Activated naive CD4-positive, alpha-beta T cell treated with anti-CD3 and anti-CD28 coated beads for 36 hours (primary cell): ENCODE measurements at regions of chr2 and their contacts with region 1.

Region 1: GRCh38 chr2:160406591-160407392 is 86.8 kb downstream of the RBMS1 start:
- DNase-seq: peak; percentile 85
- H3K4me3 Mint-ChIP-seq: peak overlapping the region; percentile 81
- H3K27ac Mint-ChIP-seq: peak overlapping the region; percentile 94
- H3K4me1 Mint-ChIP-seq: peaks cover 75% of the 10 kb centered on the region
- H3K27me3 Mint-ChIP-seq: no peaks in the 10 kb centered on the region

Region 2: GRCh38 chr2:159168707-159169106 is 1238.1 kb before region 1 on chr2:
- CTCF ChIA-PET with region 1: no interaction called
- intact Hi-C with region 1: no loop called
- DNase-seq: no peak
- H3K4me3 Mint-ChIP-seq: no peak overlapping the region
- H3K27ac Mint-ChIP-seq: no peak overlapping the region
- H3K4me1 Mint-ChIP-seq: no peaks in the 10 kb centered on the region
- H3K27me3 Mint-ChIP-seq: no peaks in the 10 kb centered on the region

Region 3: DNA sequence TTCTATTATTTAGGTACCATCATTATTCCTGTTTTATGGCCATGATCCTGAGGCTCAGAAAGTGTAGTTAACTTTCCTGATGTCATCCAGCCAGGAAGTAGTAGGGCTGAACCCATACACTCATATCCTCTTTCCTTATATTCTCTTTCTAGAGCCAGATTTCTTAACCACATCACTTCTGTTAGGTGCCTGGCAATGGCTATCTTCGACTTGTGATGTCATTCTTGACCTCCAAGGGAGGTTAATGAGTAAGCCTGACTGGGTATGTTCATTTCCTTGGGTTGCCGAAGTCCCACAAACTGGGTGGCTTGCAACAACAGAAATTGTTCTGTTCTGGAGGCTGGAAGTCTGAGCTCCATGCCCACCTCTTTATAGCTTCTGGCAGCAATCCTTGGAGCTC is 250.1 kb before region 1 on chr2:
- CTCF ChIA-PET with region 1: no interaction called
- intact Hi-C with region 1: no loop called
- DNase-seq: no peak
- H3K4me3 Mint-ChIP-seq: no peak overlapping the region
- H3K27ac Mint-ChIP-seq: no peak overlapping the region
- H3K4me1 Mint-ChIP-seq: no peaks in the 10 kb centered on the region
- H3K27me3 Mint-ChIP-seq: no peaks in the 10 kb centered on the region

Region 4: GRCh38 chr2:160269803-160270570 is 136.8 kb before region 1 on chr2:
- CTCF ChIA-PET with region 1: no interaction called
- intact Hi-C with region 1: loop called (anchors 5 kb)
- DNase-seq: peak; percentile 64
- H3K4me3 Mint-ChIP-seq: peak overlapping the region; percentile 65
- H3K27ac Mint-ChIP-seq: peak overlapping the region; percentile 53
- H3K4me1 Mint-ChIP-seq: peaks cover 39% of the 10 kb centered on the region
- H3K27me3 Mint-ChIP-seq: no peaks in the 10 kb centered on the region

Region 5: DNA sequence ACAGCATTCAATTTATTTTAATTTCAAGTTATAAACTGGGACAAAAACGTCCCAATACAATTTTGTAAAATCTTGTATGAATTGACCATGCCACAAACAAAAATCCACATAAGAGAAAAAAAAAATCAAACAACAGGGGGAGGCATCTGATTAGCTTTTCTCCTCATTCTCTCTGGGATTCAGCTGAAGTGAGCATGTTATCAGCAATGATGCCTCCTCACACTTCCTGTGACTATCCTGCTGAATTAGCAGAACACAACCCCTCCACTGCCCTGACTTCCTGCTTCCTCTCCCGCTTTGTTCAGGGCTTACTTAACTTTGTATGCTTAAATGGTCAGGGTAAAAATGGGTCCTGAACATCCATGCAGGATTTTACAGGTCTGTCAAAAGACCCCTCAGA is 74.5 kb before region 1 on chr2:
- CTCF ChIA-PET with region 1: interaction called, 3 read pairs
- intact Hi-C with region 1: loop called (anchors 2 kb)
- DNase-seq: peak; percentile 50
- H3K4me3 Mint-ChIP-seq: no peak overlapping the region
- H3K27ac Mint-ChIP-seq: peak overlapping the region; percentile 38
- H3K4me1 Mint-ChIP-seq: peaks cover 81% of the 10 kb centered on the region
- H3K27me3 Mint-ChIP-seq: no peaks in the 10 kb centered on the region

Region 6: DNA sequence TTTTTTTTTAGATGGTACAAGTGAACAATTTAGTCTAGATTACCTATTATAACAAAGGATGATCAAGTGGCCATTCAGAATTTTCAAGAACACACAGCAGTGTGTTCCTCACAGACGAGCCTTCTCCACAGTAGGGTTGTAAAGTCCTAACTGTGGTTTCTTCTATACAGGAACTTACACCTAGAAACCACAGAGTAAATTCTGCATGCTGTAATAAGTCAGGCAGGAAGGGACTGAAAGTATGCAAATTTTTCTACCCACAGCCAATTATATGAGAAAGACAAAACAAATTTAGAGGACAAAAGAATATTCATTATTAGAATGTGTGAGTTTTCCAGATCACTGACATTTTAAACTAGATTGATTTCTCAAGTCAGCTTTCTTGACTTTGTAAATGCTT is 12.6 kb before region 1 on chr2:
- CTCF ChIA-PET with region 1: interaction called, 5 read pairs
- intact Hi-C with region 1: loop called (anchors 1 kb)
- DNase-seq: no peak
- H3K4me3 Mint-ChIP-seq: peak overlapping the region; percentile 26
- H3K27ac Mint-ChIP-seq: peak overlapping the region; percentile 83
- H3K4me1 Mint-ChIP-seq: peaks cover 60% of the 10 kb centered on the region
- H3K27me3 Mint-ChIP-seq: no peaks in the 10 kb centered on the region

Region 7: GRCh38 chr2:160493227-160494028 is 86.6 kb after region 1 on chr2 and contains the start of gene RBMS1:
- CTCF ChIA-PET with region 1: interaction called, 3 read pairs
- intact Hi-C with region 1: loop called (anchors 1 kb)
- DNase-seq: peak; percentile 58
- H3K4me3 Mint-ChIP-seq: peak within 1 kb of the TSS; percentile 93
- H3K27ac Mint-ChIP-seq: peak within 1 kb of the TSS; percentile 93
- H3K4me1 Mint-ChIP-seq: peaks cover 43% of the 10 kb centered on the region
- H3K27me3 Mint-ChIP-seq: no peaks in the 10 kb centered on the region
- total RNA-seq, gene RBMS1: 27.8 to 29.1 TPM

Region 8: DNA sequence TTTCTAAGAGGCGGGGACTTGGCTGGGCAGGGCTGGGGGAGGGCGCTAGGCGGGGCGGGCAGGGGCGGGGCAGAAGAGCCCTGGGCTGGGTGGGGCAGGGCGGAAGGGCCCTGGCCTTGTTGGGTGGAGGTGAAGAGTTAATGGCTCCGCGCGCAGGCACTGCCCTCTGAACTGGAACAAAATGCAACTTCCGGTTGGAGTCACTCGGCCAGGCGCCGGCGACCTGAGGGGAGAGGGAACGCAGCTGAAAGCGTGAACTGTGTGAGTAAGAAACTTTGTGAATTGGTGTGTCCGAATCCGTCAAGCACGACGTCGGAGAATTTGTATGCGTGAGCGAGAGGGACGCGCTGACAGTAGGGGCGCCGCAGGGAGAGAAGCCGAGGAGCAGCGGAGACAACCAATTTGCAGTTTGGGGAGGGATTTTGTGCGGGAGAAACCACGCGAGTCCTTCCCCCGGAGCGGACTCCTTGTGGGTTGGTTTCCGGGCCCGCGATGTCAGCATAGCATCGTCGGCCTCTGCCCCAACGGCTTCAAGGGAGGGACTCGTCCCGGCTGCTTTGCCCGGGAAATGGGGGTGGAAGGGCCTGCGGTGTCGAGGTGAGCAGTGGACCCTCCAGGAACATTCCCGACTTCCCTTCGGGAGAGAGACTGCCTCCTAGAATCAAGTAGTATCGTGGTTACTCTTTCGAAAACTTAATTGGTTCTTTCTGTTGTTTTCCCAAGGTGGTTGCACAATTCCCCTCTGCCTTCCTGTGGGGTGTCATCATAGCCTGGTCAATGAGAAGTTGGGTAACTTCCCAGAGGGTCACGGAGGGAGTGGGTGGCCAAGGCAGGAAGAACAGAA is 753.7 kb after region 1 on chr2 and contains the start of gene TANK:
- CTCF ChIA-PET with region 1: no interaction called
- intact Hi-C with region 1: loop called (anchors 1 kb)
- DNase-seq: peak; percentile 94
- H3K4me3 Mint-ChIP-seq: peak within 1 kb of the TSS; percentile 96
- H3K27ac Mint-ChIP-seq: peak within 1 kb of the TSS; percentile 99
- H3K4me1 Mint-ChIP-seq: peaks cover 48% of the 10 kb centered on the region
- H3K27me3 Mint-ChIP-seq: no peaks in the 10 kb centered on the region
- total RNA-seq, gene TANK: 48.6 to 50.4 TPM